Activated CD4-positive, alpha-beta memory T cell treated with anti-CD3 and anti-CD28 coated beads for 36 hours (primary cell): ENCODE measurements at regions of chr20 and their contacts with region 1.

Region 1: GRCh38 chr20:266596-267562 is 9.4 kb downstream of the DEFB132 start:
- DNase-seq: peak; percentile 93
- H3K4me3 Mint-ChIP-seq: peak overlapping the region; percentile 78
- H3K27ac Mint-ChIP-seq: peak overlapping the region; percentile 25
- H3K4me1 Mint-ChIP-seq: peaks cover 10% of the 10 kb centered on the region
- H3K27me3 Mint-ChIP-seq: peaks cover 6% of the 10 kb centered on the region

Region 2: DNA sequence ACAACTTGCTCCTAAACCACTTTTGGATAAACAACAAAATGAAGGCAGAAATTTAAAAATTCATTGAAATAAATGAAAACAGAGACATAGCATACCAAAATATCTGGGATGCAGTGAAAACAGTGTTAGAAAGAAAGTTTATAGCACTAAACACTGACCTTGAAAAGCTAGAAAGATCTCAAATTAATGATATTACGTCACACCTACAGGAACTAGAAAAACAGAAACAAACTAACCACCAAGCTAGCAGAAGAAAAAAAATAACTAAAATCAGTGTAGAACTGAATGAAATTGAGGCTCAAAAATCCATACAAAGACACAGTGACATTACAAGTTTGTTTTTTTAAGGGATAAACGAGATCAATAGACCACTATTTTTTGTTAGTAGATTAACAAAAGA is 82.6 kb before region 1 on chr20:
- CTCF ChIA-PET with region 1: no interaction called
- POLR2A ChIA-PET with region 1: no interaction called
- intact Hi-C with region 1: no loop called
- DNase-seq: no peak
- H3K4me3 Mint-ChIP-seq: no peak overlapping the region
- H3K27ac Mint-ChIP-seq: no peak overlapping the region
- H3K4me1 Mint-ChIP-seq: no peaks in the 10 kb centered on the region
- H3K27me3 Mint-ChIP-seq: peaks cover 48% of the 10 kb centered on the region

Region 3: GRCh38 chr20:208942-209566 is 57.8 kb before region 1 on chr20:
- CTCF ChIA-PET with region 1: interaction called, 18 read pairs
- POLR2A ChIA-PET with region 1: no interaction called
- intact Hi-C with region 1: loop called (anchors 1 kb)
- DNase-seq: peak; percentile 11
- H3K4me3 Mint-ChIP-seq: no peak overlapping the region
- H3K27ac Mint-ChIP-seq: no peak overlapping the region
- H3K4me1 Mint-ChIP-seq: no peaks in the 10 kb centered on the region
- H3K27me3 Mint-ChIP-seq: no peaks in the 10 kb centered on the region

Region 4: GRCh38 chr20:214383-214782 is 52.5 kb before region 1 on chr20:
- CTCF ChIA-PET with region 1: interaction called, 18 read pairs
- POLR2A ChIA-PET with region 1: no interaction called
- intact Hi-C with region 1: loop called (anchors 1 kb)
- DNase-seq: no peak
- H3K4me3 Mint-ChIP-seq: no peak overlapping the region
- H3K27ac Mint-ChIP-seq: no peak overlapping the region
- H3K4me1 Mint-ChIP-seq: no peaks in the 10 kb centered on the region
- H3K27me3 Mint-ChIP-seq: peaks cover 8% of the 10 kb centered on the region

Region 5: DNA sequence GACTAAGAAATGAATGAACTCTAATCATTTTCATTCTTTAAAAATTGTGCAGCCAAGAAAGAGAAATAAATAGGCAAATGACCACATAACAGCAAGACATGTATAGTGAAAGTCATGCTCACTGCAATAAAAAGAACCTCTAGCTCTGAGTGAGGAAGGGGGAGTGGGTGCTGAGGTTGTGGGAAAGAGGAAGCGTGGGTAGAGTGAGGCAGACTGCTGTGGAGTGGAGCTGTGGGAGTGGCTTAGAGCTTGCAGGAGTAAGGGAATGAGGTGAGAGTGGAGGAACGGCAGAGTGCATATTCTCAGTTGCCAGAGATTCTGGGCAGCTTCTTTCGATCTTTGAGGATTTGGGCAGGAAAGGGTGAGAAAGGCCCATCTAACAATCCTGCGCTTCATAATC is 29.4 kb before region 1 on chr20:
- CTCF ChIA-PET with region 1: interaction called, 23 read pairs
- POLR2A ChIA-PET with region 1: no interaction called
- intact Hi-C with region 1: loop called (anchors 1 kb)
- DNase-seq: peak; percentile 62
- H3K4me3 Mint-ChIP-seq: peak overlapping the region; percentile 54
- H3K27ac Mint-ChIP-seq: peak overlapping the region; percentile 75
- H3K4me1 Mint-ChIP-seq: peaks cover 22% of the 10 kb centered on the region
- H3K27me3 Mint-ChIP-seq: peaks cover 4% of the 10 kb centered on the region